ENCODE measurements at regions of chr18 and their contacts with region 1.

Region 1: GRCh38 chr18:35040988-35041814 is at the start of gene MAPRE2:
- DNase-seq: peak; percentile 100
- ATAC-seq: peak; percentile 85
- H3K4me3 ChIP-seq: peak within 1 kb of the TSS; percentile 93 to 99 (median 97)
- H3K4me3 Mint-ChIP-seq: peak within 1 kb of the TSS; percentile 95
- H3K27ac ChIP-seq: peak within 1 kb of the TSS; percentile 95 to 96
- H3K27ac Mint-ChIP-seq: peak within 1 kb of the TSS; percentile 96
- H3K4me1 ChIP-seq: peaks cover 73 to 77% of the 10 kb centered on the region in 2 donors
- H3K4me1 Mint-ChIP-seq: peaks cover 83% of the 10 kb centered on the region
- H3K27me3 ChIP-seq: no peaks in the 10 kb centered on the region
- H3K27me3 Mint-ChIP-seq: no peaks in the 10 kb centered on the region
- CTCF ChIP-seq: peak; percentile 18
- total RNA-seq, gene MAPRE2: 62.6 and 63.3 TPM in 2 replicates

Region 2: GRCh38 chr18:35005963-35006577 is 35.1 kb before region 1 on chr18:
- CTCF ChIA-PET with region 1: interaction called, 10 read pairs
- POLR2A ChIA-PET with region 1: no interaction called
- intact Hi-C with region 1: loop called (anchors 2 kb)
- DNase-seq: peak; percentile 74
- ATAC-seq: peak; percentile 63
- H3K4me3 ChIP-seq: no peak overlapping the region
- H3K4me3 Mint-ChIP-seq: no peak overlapping the region
- H3K27ac ChIP-seq: no peak overlapping the region
- H3K27ac Mint-ChIP-seq: no peak overlapping the region
- H3K4me1 ChIP-seq: no peaks in the 10 kb centered on the region
- H3K4me1 Mint-ChIP-seq: no peaks in the 10 kb centered on the region
- H3K27me3 ChIP-seq: no peaks in the 10 kb centered on the region
- H3K27me3 Mint-ChIP-seq: peaks cover 4% of the 10 kb centered on the region
- CTCF ChIP-seq: peak; percentile 77

Region 3: DNA sequence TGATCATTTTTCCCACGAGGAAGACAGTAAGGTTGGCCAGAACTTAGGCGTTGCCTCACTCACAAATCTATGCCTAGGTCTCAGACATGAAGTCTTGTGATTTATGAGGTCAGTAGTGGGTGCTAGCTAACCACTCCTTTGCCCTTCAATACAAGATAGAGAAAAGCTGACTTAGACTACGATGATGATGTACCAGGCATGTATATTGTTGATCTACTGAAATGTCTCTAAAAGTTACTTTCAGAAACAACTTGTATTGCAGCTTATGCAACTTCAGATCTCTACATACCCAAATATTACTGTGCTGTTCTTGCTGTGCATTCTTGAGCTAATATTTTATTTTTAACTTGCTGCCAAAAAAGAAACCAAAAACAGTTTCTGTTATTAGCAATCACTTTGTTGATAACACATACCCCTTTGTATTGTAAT is 30.6 kb after region 1 on chr18:
- CTCF ChIA-PET with region 1: interaction called, 9 read pairs
- POLR2A ChIA-PET with region 1: no interaction called
- intact Hi-C with region 1: loop called (anchors 1 kb)
- DNase-seq: no peak
- ATAC-seq: no peak
- H3K4me3 ChIP-seq: no peak overlapping the region
- H3K4me3 Mint-ChIP-seq: no peak overlapping the region
- H3K27ac ChIP-seq: peak overlapping the region in 1 of 2 donors; percentile 65
- H3K27ac Mint-ChIP-seq: peak overlapping the region; percentile 42
- H3K4me1 ChIP-seq: peaks cover 10 to 17% of the 10 kb centered on the region in 2 donors
- H3K4me1 Mint-ChIP-seq: peaks cover 53% of the 10 kb centered on the region
- H3K27me3 ChIP-seq: no peaks in the 10 kb centered on the region
- H3K27me3 Mint-ChIP-seq: no peaks in the 10 kb centered on the region
- CTCF ChIP-seq: no peak

Region 4: DNA sequence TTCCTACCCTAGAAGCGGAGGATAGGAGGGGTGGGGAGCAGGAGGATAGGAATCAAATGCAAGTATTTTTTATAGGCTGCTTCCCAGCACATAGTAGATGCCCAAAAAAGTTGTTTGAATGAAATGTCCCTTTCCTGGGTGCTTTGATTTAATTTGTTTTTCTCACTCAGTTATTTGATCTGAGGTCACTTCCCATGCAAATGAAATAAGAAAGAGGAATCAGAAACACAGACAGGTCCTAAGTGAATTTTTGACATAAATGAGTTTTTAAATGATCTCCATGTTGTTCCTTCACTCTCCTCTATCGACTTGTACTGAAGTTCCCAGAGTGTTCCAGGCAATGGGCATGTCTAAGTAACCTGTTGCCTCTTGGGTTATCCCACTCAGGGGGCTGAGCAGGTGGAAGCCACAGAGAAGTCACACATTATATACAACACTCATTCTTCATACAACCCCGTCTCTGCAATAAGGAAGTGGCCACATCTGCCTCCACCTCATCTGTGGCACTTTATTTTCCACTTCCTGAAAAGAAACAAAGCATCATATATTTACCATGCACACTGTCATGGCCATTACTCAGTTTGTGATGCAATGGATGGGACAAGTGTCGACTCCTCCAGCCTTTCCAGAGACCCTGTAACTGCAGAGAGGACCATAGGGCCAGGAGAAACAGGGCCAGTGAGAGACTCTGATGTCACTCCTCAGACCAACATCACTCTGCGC is 117.7 kb after region 1 on chr18:
- CTCF ChIA-PET with region 1: no interaction called
- POLR2A ChIA-PET with region 1: no interaction called
- intact Hi-C with region 1: loop called (anchors 5 kb)
- DNase-seq: peak; percentile 74
- ATAC-seq: peak; percentile 94
- H3K4me3 ChIP-seq: peak overlapping the region in 2 of 5 experiments; percentile 10 to 21
- H3K4me3 Mint-ChIP-seq: peak overlapping the region; percentile 76
- H3K27ac ChIP-seq: peak overlapping the region; percentile 74 to 75
- H3K27ac Mint-ChIP-seq: peak overlapping the region; percentile 95
- H3K4me1 ChIP-seq: peaks cover 30 to 32% of the 10 kb centered on the region in 2 donors
- H3K4me1 Mint-ChIP-seq: peaks cover 30% of the 10 kb centered on the region
- H3K27me3 ChIP-seq: no peaks in the 10 kb centered on the region
- H3K27me3 Mint-ChIP-seq: no peaks in the 10 kb centered on the region
- CTCF ChIP-seq: no peak

Region 5: DNA sequence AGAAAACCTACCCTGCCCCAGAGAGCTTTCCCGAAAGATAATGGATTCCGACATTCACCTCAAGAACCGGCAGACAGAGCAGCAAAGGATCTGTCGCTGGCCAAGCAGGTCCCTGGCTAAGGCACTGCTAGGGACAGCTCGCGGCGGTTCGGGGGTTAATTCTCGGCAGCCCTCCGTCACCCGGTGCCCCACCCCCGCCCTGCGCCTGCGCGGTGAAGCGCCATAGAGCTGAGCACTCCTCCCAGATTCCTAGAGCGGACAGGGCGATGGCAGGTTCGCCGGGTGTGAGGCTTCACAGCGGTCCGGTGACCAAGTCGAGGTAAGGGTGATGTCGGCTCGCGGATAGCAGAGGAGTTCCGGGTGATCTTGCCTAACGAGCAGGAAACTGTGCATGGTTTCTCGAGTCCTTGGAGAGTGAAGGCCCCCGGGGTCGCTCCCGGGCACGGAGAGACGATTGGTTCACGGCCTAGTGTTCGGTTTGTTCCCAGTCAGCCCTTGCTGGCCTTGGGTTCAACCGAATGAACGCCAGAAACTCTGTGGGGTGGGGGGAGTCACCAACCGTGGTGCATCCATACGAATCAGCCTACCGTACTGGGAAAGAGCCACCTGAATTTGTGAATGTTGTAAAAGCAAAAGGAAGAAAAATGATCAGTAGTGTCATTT is 249.0 kb after region 1 on chr18 and contains the start of gene ZSCAN30:
- CTCF ChIA-PET with region 1: no interaction called
- POLR2A ChIA-PET with region 1: no interaction called
- intact Hi-C with region 1: loop called (anchors 1 kb)
- DNase-seq: peak; percentile 97
- ATAC-seq: peak; percentile 99
- H3K4me3 ChIP-seq: peak within 1 kb of the TSS; percentile 85 to 94 (median 90)
- H3K4me3 Mint-ChIP-seq: peak within 1 kb of the TSS; percentile 100
- H3K27ac ChIP-seq: peak within 1 kb of the TSS; percentile 80 to 86
- H3K27ac Mint-ChIP-seq: peak within 1 kb of the TSS; percentile 98
- H3K4me1 ChIP-seq: peaks cover 14 to 16% of the 10 kb centered on the region in 2 donors
- H3K4me1 Mint-ChIP-seq: peaks cover 45% of the 10 kb centered on the region
- H3K27me3 ChIP-seq: no peaks in the 10 kb centered on the region
- H3K27me3 Mint-ChIP-seq: no peaks in the 10 kb centered on the region
- CTCF ChIP-seq: no peak
- total RNA-seq, gene ZSCAN30: 32.0 and 37.3 TPM in 2 replicates

Region 6: DNA sequence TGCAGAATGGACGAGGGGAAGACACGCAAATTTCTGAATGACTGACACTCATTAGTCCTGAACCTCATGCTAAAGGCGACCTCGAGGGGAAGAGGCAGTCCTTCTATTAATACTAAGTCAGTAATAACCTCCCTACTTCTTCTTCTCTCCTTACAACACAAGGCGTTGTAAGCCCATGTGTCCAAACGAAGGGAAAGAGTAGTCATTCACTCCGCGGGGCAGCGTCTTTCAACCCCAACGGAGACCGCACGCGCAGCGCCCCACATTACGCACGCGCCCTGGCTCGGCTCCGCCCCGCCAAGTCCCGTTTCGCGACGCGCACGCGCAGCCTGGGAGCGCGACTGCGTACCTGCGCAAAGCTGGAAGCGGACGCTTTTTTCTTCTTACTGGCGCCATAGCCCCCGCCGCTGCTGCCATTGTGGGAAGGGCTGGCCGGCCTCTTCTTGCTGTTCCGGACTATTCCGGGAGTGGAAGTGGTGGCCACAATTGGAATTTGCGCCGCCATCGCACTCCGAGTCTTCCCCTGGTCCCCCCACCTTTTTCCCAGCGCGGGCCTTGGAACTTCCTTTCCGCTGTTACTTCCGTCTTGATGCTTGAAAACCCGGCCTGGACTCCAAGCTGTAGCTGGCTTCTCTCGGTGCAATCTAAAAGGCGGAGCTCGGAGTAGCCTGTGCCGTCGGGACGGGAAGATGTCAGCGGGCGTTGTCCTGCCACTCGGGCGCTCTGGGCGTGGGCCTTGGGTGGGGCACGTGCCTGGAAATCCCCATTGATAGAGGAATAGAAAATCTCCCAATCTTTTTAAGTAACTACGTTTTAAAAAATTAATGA is 456.4 kb after region 1 on chr18 and contains the start of gene INO80C:
- CTCF ChIA-PET with region 1: interaction called, 4 read pairs
- POLR2A ChIA-PET with region 1: no interaction called
- intact Hi-C with region 1: loop called (anchors 2 kb)
- DNase-seq: peak; percentile 97
- ATAC-seq: peak; percentile 89
- H3K4me3 ChIP-seq: peak within 1 kb of the TSS; percentile 64 to 98 (median 94)
- H3K4me3 Mint-ChIP-seq: peak within 1 kb of the TSS; percentile 94
- H3K27ac ChIP-seq: peak within 1 kb of the TSS; percentile 92 to 95
- H3K27ac Mint-ChIP-seq: peak within 1 kb of the TSS; percentile 99
- H3K4me1 ChIP-seq: peaks cover 21 to 25% of the 10 kb centered on the region in 2 donors
- H3K4me1 Mint-ChIP-seq: peaks cover 53% of the 10 kb centered on the region
- H3K27me3 ChIP-seq: no peaks in the 10 kb centered on the region
- H3K27me3 Mint-ChIP-seq: no peaks in the 10 kb centered on the region
- CTCF ChIP-seq: no peak
- total RNA-seq, gene INO80C: 37.9 and 38.5 TPM in 2 replicates

Region 7: DNA sequence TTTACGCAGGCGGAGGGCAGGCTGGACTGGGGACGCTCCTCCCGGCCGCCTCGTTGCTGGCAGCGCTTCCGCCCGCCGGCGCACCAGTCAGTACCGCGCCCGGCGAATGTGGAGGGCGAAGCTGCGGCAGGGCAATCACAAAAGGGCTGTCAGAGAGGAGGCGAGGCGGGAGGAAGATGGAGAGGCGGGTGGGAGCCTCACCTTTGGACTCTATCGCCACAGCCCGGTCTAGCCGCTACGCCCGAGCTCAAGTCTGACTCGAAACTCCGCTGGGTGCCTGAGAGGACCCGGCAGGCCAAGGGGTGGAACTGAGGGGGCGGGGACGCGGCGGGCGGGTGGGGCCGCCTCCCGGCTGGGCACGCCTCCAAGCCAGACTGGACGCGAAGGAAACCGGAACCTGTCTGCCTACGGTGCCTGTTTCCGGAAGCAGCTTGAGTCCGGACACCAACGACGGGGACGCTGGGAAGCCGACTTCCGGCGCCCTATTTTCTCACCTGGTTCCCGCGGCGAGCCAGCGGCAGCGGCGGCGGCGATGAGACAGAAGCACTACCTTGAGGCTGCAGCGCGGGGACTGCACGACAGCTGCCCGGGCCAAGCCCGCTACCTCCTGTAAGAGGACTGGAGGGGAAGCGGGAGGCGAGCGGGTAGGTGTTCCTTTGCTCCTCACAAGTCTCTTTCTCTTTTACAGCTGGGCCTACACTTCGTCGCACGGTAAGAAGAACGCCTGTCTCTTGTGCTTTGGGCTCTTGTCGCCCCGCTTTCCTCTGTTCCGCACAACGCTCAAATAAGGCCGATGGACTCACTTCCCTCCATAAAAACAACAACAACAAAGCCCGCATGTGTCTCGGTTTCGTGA is 931.2 kb after region 1 on chr18 and contains the start of gene RMP24:
- CTCF ChIA-PET with region 1: no interaction called
- POLR2A ChIA-PET with region 1: no interaction called
- intact Hi-C with region 1: loop called (anchors 1 kb)
- DNase-seq: peak; percentile 94
- ATAC-seq: peak; percentile 94
- H3K4me3 ChIP-seq: peak within 1 kb of the TSS; percentile 85 to 98 (median 94)
- H3K4me3 Mint-ChIP-seq: peak within 1 kb of the TSS; percentile 91
- H3K27ac ChIP-seq: peak within 1 kb of the TSS; percentile 79 to 90
- H3K27ac Mint-ChIP-seq: peak within 1 kb of the TSS; percentile 93
- H3K4me1 ChIP-seq: peaks cover 20 to 38% of the 10 kb centered on the region in 2 donors
- H3K4me1 Mint-ChIP-seq: peaks cover 53% of the 10 kb centered on the region
- H3K27me3 ChIP-seq: no peaks in the 10 kb centered on the region
- H3K27me3 Mint-ChIP-seq: no peaks in the 10 kb centered on the region
- CTCF ChIP-seq: no peak

Measured in B cell (primary cell).